HepG2 (cell line): ENCODE measurements at regions of chr6 and their contacts with region 1.

Region 1: GRCh38 chr6:22392711-22393110 is 95.9 kb upstream of the PRL start:
- DNase-seq: no peak
- ATAC-seq: no peak
- H3K4me3 ChIP-seq: no peak overlapping the region
- H3K27ac ChIP-seq: no peak overlapping the region
- H3K4me1 ChIP-seq: no peaks in the 10 kb centered on the region
- H3K27me3 ChIP-seq: no peaks in the 10 kb centered on the region
- CTCF ChIP-seq: no peak
- EP300 ChIP-seq: no peak
- POLR2A ChIP-seq: no peak
- RAD21 ChIP-seq: no peak

Region 2: DNA sequence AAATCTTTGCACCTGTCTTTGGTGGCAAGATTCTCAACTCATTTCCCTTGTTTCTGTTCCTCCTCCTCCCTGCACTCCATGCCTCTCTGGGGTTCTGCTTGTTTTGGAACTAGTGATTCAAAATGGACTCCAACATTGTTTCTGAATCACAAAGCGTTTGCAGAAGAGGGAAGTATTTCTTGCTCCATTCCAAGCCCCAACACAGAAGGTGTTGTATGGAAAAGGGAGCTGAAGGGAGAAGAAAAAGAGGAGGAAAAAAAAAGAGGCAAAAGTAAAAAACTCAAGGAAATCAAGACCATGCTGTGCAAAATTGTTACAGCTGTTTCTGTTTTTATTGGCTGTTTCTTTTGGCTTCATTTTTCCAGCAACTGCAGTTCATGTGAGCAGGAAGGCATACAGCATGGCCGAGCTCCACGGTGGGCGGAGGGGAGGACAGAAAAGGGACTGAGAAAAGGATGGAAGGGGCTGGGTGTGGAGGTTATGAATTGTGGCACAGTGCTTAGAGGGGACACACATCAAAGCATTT is 28.9 kb before region 1 on chr6:
- CTCF ChIA-PET with region 1: no interaction called
- POLR2A ChIA-PET with region 1: no interaction called
- in situ Hi-C with region 1: no loop called
- intact Hi-C with region 1: loop called (anchors 1 kb)
- DNase-seq: no peak
- ATAC-seq: no peak
- H3K4me3 ChIP-seq: no peak overlapping the region
- H3K27ac ChIP-seq: no peak overlapping the region
- H3K4me1 ChIP-seq: no peaks in the 10 kb centered on the region
- H3K27me3 ChIP-seq: no peaks in the 10 kb centered on the region
- CTCF ChIP-seq: no peak
- EP300 ChIP-seq: no peak
- POLR2A ChIP-seq: no peak
- RAD21 ChIP-seq: no peak

Region 3: DNA sequence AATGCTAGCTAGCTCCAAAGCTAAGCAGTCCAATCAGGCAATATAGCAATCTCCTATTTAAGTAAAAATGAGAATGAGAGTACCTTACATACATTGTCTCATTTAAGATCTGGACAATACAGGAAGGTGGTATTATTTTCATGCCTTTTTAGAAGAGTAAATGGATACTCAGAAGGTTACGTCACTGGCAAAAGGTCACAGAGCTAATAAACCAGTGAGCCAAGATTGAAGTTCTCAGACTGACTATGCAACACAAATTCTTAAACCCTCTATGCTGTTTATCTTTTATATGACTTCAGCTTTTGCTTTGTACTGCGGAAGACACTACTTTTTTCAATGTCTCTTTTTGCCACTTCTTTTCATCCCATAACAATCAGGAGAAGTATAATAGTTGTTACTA is 39.3 kb after region 1 on chr6:
- CTCF ChIA-PET with region 1: no interaction called
- POLR2A ChIA-PET with region 1: no interaction called
- in situ Hi-C with region 1: no loop called
- intact Hi-C with region 1: loop called (anchors 1 kb)
- DNase-seq: no peak
- ATAC-seq: no peak
- H3K4me3 ChIP-seq: no peak overlapping the region
- H3K27ac ChIP-seq: no peak overlapping the region
- H3K4me1 ChIP-seq: no peaks in the 10 kb centered on the region
- H3K27me3 ChIP-seq: no peaks in the 10 kb centered on the region
- CTCF ChIP-seq: no peak
- EP300 ChIP-seq: no peak
- POLR2A ChIP-seq: no peak
- RAD21 ChIP-seq: no peak